ENCODE measurements at regions of chr1 and their contacts with region 1.

Region 1: DNA sequence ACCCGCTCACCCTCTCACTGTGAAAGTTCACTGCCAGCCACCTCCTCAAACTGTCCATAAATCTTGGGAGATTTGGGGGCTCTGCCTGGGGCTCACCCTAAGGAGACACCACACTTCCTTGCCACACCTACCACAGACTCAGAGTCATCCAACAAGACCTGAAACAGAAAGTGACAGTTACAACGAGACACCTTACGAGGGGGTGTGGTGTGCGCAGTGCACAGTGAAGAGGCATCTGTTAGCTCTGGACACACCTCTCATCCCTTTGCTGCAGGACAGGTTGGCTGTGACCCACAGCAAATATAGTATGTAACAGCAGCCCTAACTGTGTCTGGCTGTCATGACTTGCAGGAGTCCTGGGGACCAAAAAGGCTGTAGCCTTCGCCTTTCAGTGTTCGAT is 190.2 kb downstream of the NR5A2 start:
- DNase-seq: no peak
- H3K4me3 Mint-ChIP-seq: no peak overlapping the region
- H3K27ac Mint-ChIP-seq: no peak overlapping the region
- H3K4me1 Mint-ChIP-seq: no peaks in the 10 kb centered on the region
- H3K27me3 Mint-ChIP-seq: peaks cover 8% of the 10 kb centered on the region
- CTCF ChIP-seq: no peak

Region 2: GRCh38 chr1:200107004-200107470 is 110.7 kb before region 1 on chr1:
- CTCF ChIA-PET with region 1: no interaction called
- intact Hi-C with region 1: no loop called
- DNase-seq: peak; percentile 43
- H3K4me3 Mint-ChIP-seq: peak overlapping the region; percentile 50
- H3K27ac Mint-ChIP-seq: peak overlapping the region; percentile 53
- H3K4me1 Mint-ChIP-seq: peaks cover 41% of the 10 kb centered on the region
- H3K27me3 Mint-ChIP-seq: no peaks in the 10 kb centered on the region
- CTCF ChIP-seq: no peak

Region 3: DNA sequence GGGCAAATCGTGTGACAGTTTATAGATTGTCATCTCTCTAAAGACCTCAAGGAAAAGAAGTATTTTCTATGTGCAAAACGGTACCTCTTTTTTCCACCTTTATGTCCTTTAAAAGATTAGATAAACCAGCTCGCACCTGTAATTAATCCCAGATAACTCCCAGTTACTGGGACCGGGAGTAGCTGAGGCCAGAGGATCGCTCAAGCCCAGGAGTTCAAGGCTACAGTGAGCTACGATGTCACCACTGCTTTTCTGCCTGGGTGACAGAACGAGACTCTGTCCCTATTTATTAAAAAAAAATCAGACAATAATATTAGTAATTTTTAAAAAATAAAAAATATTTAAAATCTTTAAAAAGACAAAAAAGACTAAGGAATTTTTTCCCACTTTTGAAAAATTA is 48.8 kb before region 1 on chr1:
- CTCF ChIA-PET with region 1: interaction called, 10 read pairs
- intact Hi-C with region 1: no loop called
- DNase-seq: no peak
- H3K4me3 Mint-ChIP-seq: no peak overlapping the region
- H3K27ac Mint-ChIP-seq: no peak overlapping the region
- H3K4me1 Mint-ChIP-seq: no peaks in the 10 kb centered on the region
- H3K27me3 Mint-ChIP-seq: no peaks in the 10 kb centered on the region
- CTCF ChIP-seq: no peak

Region 4: GRCh38 chr1:200302192-200302920 is 84.6 kb after region 1 on chr1:
- CTCF ChIA-PET with region 1: no interaction called
- intact Hi-C with region 1: no loop called
- DNase-seq: peak; percentile 56
- H3K4me3 Mint-ChIP-seq: peak overlapping the region; percentile 64
- H3K27ac Mint-ChIP-seq: no peak overlapping the region
- H3K4me1 Mint-ChIP-seq: no peaks in the 10 kb centered on the region
- H3K27me3 Mint-ChIP-seq: peaks cover 13% of the 10 kb centered on the region
- CTCF ChIP-seq: no peak